Caco-2 (cell line): ENCODE measurements at regions of chrX and their contacts with region 1.

Region 1: DNA sequence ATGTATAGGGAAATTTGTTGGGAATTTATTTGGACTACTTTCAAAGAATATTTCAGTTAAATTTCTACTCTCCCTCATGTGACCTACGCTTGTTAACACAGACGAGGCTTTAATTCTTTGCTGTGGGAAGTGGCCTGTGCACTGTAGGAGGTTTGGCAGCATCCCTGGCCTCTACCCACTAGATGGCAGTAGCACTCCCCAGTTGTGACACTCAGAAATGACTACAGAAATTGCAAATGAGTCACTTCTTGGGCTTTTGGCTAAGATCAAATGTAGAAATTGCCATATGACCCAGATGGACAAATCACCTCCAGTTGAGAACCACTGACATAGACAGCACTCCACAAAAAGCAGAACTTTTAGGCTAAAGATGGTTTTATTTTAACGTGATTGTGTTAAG is 22.1 kb downstream of the PIR start:
- DNase-seq: peak; percentile 41 to 64
- H3K4me3 ChIP-seq: no peak overlapping the region
- H3K4me3 Mint-ChIP-seq: no peak overlapping the region
- H3K27ac Mint-ChIP-seq: no peak overlapping the region
- H3K4me1 ChIP-seq: no peaks in the 10 kb centered on the region
- H3K4me1 Mint-ChIP-seq: no peaks in the 10 kb centered on the region
- H3K27me3 ChIP-seq: no peaks in the 10 kb centered on the region
- H3K27me3 Mint-ChIP-seq: no peaks in the 10 kb centered on the region
- CTCF ChIP-seq: peak; percentile 59 to 73

Region 2: GRCh38 chrX:15349046-15349445 is 122.0 kb before region 1 on chrX:
- CTCF ChIA-PET with region 1: interaction called, 3 read pairs
- POLR2A ChIA-PET with region 1: interaction called, 4 read pairs
- intact Hi-C with region 1: loop called (anchors 1 kb)
- DNase-seq: peak; percentile 38 to 49
- H3K4me3 ChIP-seq: no peak overlapping the region
- H3K4me3 Mint-ChIP-seq: no peak overlapping the region
- H3K27ac Mint-ChIP-seq: no peak overlapping the region
- H3K4me1 ChIP-seq: no peaks in the 10 kb centered on the region
- H3K4me1 Mint-ChIP-seq: no peaks in the 10 kb centered on the region
- H3K27me3 ChIP-seq: no peaks in the 10 kb centered on the region
- H3K27me3 Mint-ChIP-seq: peaks cover 6% of the 10 kb centered on the region
- CTCF ChIP-seq: peak; percentile 24 to 29

Region 3: DNA sequence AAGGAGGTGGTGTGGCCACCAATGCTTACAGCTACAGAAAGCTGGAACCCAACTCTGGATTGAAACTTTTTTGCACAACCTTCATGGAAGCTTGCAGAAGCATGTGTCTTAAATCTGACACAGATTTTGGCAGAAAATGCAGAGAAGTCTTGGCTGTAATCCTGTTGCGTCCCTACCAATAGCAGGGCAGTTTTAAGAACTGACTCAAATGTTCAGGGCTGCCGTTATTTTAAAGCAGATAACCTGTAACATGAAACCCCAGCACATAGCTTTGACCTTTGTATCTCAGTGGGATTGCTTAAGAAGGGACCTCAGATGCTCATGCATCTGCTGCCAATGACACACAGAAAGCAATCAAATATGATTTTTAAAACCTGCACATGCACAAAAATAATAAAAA is 86.7 kb before region 1 on chrX and contains the start of gene VEGFD:
- CTCF ChIA-PET with region 1: no interaction called
- POLR2A ChIA-PET with region 1: no interaction called
- intact Hi-C with region 1: loop called (anchors 10 kb)
- DNase-seq: peak in 1 of 2 experiments; percentile 0
- H3K4me3 ChIP-seq: no peak within 1 kb of the TSS
- H3K4me3 Mint-ChIP-seq: no peak within 1 kb of the TSS
- H3K27ac Mint-ChIP-seq: no peak within 1 kb of the TSS
- H3K4me1 ChIP-seq: no peaks in the 10 kb centered on the region
- H3K4me1 Mint-ChIP-seq: no peaks in the 10 kb centered on the region
- H3K27me3 ChIP-seq: no peaks in the 10 kb centered on the region
- H3K27me3 Mint-ChIP-seq: no peaks in the 10 kb centered on the region
- CTCF ChIP-seq: no peak
- total RNA-seq, gene VEGFD: 0.36 TPM in 1 of 2 replicates, not detected in the other

Region 4: GRCh38 chrX:15493118-15493962 is 22.3 kb after region 1 on chrX and contains the start of gene PIR:
- CTCF ChIA-PET with region 1: no interaction called
- POLR2A ChIA-PET with region 1: no interaction called
- intact Hi-C with region 1: loop called (anchors 1 kb)
- DNase-seq: peak; percentile 90 to 91
- H3K4me3 ChIP-seq: peak within 1 kb of the TSS; percentile 53
- H3K4me3 Mint-ChIP-seq: peak within 1 kb of the TSS; percentile 82
- H3K27ac Mint-ChIP-seq: peak within 1 kb of the TSS; percentile 68
- H3K4me1 ChIP-seq: 0 out of 2 replicates have a peak, but pooled peaks cover 6% of the 10 kb centered on the region
- H3K4me1 Mint-ChIP-seq: peaks cover 6% of the 10 kb centered on the region
- H3K27me3 ChIP-seq: no peaks in the 10 kb centered on the region
- H3K27me3 Mint-ChIP-seq: no peaks in the 10 kb centered on the region
- CTCF ChIP-seq: peak in 1 of 2 experiments; percentile 57
- total RNA-seq, gene PIR: 12.0 and 15.7 TPM in 2 replicates

Region 5: DNA sequence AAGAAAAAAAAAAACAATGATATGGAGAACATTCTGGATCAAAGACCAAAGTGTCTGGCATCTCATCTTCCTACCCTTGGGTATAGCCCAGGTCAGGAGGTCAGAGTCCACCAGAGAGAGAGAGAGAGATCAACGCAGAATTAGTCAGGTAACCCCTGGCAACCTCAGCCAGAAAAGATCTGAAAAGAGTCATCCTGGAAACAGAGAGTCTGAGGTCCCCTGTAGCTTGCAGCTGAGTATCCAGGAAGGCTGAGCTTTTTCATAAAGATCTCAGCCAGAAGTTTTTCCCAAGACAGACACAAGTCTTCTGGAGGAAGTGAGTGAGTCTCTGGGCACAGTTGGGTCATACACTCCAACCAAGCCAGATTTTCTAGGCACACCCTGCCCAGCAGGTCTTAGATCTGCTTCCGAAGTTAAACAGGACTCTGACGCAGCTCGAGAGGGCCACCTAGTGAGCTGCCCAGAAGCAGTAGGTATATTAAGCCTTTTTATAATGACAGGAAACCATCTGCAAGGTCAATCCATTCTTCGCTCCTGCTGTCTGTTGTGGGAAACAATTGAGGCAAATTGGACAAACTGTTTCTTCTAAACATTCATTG is 94.1 kb after region 1 on chrX:
- CTCF ChIA-PET with region 1: interaction called, 3 read pairs
- POLR2A ChIA-PET with region 1: no interaction called
- intact Hi-C with region 1: loop called (anchors 1 kb)
- DNase-seq: peak; percentile 50 to 53
- H3K4me3 ChIP-seq: no peak overlapping the region
- H3K4me3 Mint-ChIP-seq: no peak overlapping the region
- H3K27ac Mint-ChIP-seq: no peak overlapping the region
- H3K4me1 ChIP-seq: no peaks in the 10 kb centered on the region
- H3K4me1 Mint-ChIP-seq: peaks cover 6% of the 10 kb centered on the region
- H3K27me3 ChIP-seq: no peaks in the 10 kb centered on the region
- H3K27me3 Mint-ChIP-seq: peaks cover 3% of the 10 kb centered on the region
- CTCF ChIP-seq: peak; percentile 42 to 52

Region 6: GRCh38 chrX:15616531-15616930 is 145.5 kb after region 1 on chrX:
- CTCF ChIA-PET with region 1: no interaction called
- POLR2A ChIA-PET with region 1: no interaction called
- intact Hi-C with region 1: no loop called
- DNase-seq: no peak
- H3K4me3 ChIP-seq: no peak overlapping the region
- H3K4me3 Mint-ChIP-seq: no peak overlapping the region
- H3K27ac Mint-ChIP-seq: no peak overlapping the region
- H3K4me1 ChIP-seq: peaks cover 9% of the 10 kb centered on the region
- H3K4me1 Mint-ChIP-seq: no peaks in the 10 kb centered on the region
- H3K27me3 ChIP-seq: no peaks in the 10 kb centered on the region
- H3K27me3 Mint-ChIP-seq: no peaks in the 10 kb centered on the region
- CTCF ChIP-seq: no peak